ENCODE measurements at regions of chr3 and their contacts with region 1.

Region 1: GRCh38 chr3:128170805-128171516 is 17.7 kb downstream of the EEFSEC start:
- H3K4me3 Mint-ChIP-seq: no peak overlapping the region
- H3K27ac Mint-ChIP-seq: peak overlapping the region; percentile 34
- H3K4me1 Mint-ChIP-seq: peaks cover 53% of the 10 kb centered on the region
- H3K27me3 Mint-ChIP-seq: no peaks in the 10 kb centered on the region

Region 2: DNA sequence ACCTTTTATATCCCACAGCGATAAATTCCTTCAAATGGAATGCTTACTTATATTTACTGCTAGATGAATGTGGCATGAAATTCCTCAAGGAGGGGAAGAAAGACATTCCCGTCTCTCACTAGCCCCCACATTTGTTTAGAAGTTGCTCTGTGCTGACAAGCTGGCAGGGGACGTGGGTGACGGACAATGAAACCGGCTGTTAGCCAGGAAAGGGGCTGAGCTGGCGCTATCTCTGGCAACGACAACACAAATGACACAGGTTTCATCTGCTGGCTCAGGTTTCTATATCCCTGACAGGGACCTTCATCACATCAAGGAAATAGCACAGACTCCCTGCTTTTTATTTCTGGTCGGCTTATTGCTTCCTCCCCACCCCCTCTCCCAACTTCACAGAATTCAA is 63.1 kb before region 1 on chr3:
- intact Hi-C with region 1: no loop called
- H3K4me3 Mint-ChIP-seq: no peak overlapping the region
- H3K27ac Mint-ChIP-seq: no peak overlapping the region
- H3K4me1 Mint-ChIP-seq: peaks cover 13% of the 10 kb centered on the region
- H3K27me3 Mint-ChIP-seq: no peaks in the 10 kb centered on the region

Region 3: GRCh38 chr3:128190501-128190900 is 19.5 kb after region 1 on chr3:
- intact Hi-C with region 1: no loop called
- H3K4me3 Mint-ChIP-seq: no peak overlapping the region
- H3K27ac Mint-ChIP-seq: no peak overlapping the region
- H3K4me1 Mint-ChIP-seq: peaks cover 28% of the 10 kb centered on the region
- H3K27me3 Mint-ChIP-seq: no peaks in the 10 kb centered on the region

Region 4: DNA sequence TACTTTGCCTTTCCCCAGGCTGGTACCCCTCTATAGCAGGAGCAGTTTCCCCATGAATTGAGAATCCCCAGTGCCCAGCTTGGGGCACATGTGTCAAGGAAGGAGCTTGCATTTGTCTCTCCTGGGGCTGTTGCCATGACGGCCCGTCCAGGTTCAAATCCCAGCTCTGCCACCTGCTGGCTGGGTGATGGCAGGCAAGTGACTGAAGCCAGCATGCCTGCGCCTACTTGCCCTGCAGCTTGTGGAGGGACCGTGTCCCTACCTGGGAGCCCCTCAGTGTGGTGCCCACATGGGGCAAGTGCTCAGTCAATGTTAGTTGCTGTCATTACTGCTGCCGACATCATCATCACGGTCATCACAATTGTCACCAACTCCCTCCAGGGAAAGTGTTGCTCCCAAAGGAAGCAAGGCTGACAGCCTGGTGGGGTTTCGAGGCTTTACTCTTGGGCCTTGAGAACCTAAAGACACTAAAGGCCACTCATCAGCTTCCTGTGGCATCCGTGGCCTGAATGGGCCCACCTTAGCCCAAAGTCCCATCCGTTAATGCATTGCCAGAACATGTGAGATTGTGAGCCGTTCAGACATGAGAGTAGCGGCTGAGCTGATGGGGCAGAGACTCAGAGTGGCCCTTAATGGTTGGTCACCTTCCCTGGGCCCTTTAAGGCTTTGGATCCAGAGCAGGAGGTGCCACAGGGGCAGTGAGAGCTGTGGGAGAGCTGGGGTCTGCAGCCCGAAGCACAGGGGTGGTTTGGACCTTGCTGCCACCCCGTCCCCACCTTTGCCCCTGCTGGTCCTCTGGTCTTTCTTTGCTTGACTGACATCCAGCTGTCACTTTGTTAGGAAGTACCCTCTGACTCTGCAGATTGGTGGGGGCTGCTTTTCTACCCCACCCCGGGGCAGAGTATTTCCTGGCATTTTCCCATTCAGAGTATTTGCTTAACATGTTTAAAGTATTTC is 151.4 kb after region 1 on chr3:
- intact Hi-C with region 1: loop called (anchors 2 kb)
- H3K4me3 Mint-ChIP-seq: no peak overlapping the region
- H3K27ac Mint-ChIP-seq: no peak overlapping the region
- H3K4me1 Mint-ChIP-seq: peaks cover 19% of the 10 kb centered on the region
- H3K27me3 Mint-ChIP-seq: no peaks in the 10 kb centered on the region

Measured in dendritic cell treated with granulocyte-macrophage colony-stimulating factor and Interleukin-4, amounts not matched to agents 40 ng/mL and 50 ng/mL, for 4 days (primary cell).